ENCODE measurements at regions of chr13 and their contacts with region 1.

Region 1: GRCh38 chr13:43331672-43332071 is 308.3 kb downstream of the DNAJC15 start:
- DNase-seq: no peak
- ATAC-seq: no peak
- H3K4me3 ChIP-seq: no peak overlapping the region
- H3K27ac ChIP-seq: no peak overlapping the region
- H3K4me1 ChIP-seq: peaks cover 8 to 12% of the 10 kb centered on the region in 2 donors
- H3K27me3 ChIP-seq: no peaks in the 10 kb centered on the region
- CTCF ChIP-seq: no peak
- POLR2A ChIP-seq: no peak

Region 2: GRCh38 chr13:43368003-43368402 is 36.3 kb after region 1 on chr13:
- in situ Hi-C with region 1: no loop called
- intact Hi-C with region 1: loop called (anchors 5 kb)
- DNase-seq: no peak
- ATAC-seq: peak; percentile 25 to 51
- H3K4me3 ChIP-seq: peak overlapping the region; percentile 1 to 38 (median 26)
- H3K27ac ChIP-seq: peak overlapping the region; percentile 34 to 58 (median 52)
- H3K4me1 ChIP-seq: peaks cover 54 to 55% of the 10 kb centered on the region in 2 donors
- H3K27me3 ChIP-seq: no peaks in the 10 kb centered on the region
- CTCF ChIP-seq: no peak
- POLR2A ChIP-seq: no peak

Region 3: DNA sequence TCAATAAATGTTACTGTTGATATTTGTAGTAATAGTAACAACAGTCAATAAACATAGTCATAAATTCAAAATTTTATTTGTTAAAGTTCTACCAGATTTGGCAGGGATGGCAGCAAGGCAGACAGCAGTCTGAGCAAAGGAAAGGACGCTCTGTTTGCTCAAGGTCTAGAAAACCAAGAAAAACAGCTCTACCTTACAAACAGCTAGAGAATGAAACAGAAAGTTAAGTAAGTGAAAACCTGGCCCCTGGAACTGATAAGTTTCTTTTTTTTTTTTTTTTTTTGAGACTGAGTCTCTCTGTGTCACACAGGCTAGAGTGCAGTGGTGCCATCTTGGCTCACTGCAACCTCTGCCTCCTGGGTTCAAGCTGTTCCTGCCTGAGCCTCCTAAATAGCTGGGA is 427.2 kb after region 1 on chr13:
- in situ Hi-C with region 1: no loop called
- intact Hi-C with region 1: no loop called
- DNase-seq: no peak
- ATAC-seq: no peak
- H3K4me3 ChIP-seq: no peak overlapping the region
- H3K27ac ChIP-seq: no peak overlapping the region
- H3K4me1 ChIP-seq: no peaks in the 10 kb centered on the region
- H3K27me3 ChIP-seq: no peaks in the 10 kb centered on the region
- CTCF ChIP-seq: no peak
- POLR2A ChIP-seq: no peak

Measured in gastrocnemius medialis (tissue), 4 donors.